ENCODE measurements at regions of chr13 and their contacts with region 1.

Region 1: GRCh38 chr13:48532506-48533499 is at the start of gene RCBTB2:
- DNase-seq: peak; percentile 99
- ATAC-seq: peak; percentile 93
- H3K4me3 Mint-ChIP-seq: peak within 1 kb of the TSS; percentile 92
- H3K27ac Mint-ChIP-seq: peak within 1 kb of the TSS; percentile 99
- H3K4me1 Mint-ChIP-seq: peaks cover 44% of the 10 kb centered on the region
- H3K27me3 Mint-ChIP-seq: no peaks in the 10 kb centered on the region
- total RNA-seq, gene RCBTB2: 31.0 to 31.5 TPM

Region 2: DNA sequence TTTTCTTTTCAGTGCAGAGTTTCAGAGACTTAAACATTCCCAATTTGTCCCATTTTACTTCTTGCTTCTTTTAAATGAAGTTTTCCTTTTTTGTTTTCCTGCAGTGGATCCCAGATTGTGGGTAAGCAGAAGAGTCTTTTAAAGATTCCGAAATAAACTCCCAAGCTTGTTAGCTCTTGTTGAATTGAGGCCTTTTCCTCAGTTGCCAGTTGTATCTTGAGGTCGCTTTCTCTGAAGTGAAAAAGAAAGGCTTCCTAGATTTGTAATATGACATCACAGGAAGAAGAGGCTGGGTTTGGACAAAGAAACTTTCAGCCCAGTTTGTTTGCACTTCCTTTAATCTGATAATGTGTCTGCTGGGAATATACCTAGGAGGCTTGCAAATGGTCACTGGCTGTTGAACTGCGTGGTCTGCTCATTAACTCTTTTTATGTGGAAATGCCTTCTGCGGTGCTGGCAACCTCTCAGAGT is 119.9 kb before region 1 on chr13 and contains the start of gene LPAR6:
- CTCF ChIA-PET with region 1: no interaction called
- POLR2A ChIA-PET with region 1: interaction called, 10 read pairs
- DNase-seq: peak; percentile 35
- ATAC-seq: peak; percentile 46
- H3K4me3 Mint-ChIP-seq: peak within 1 kb of the TSS; percentile 96
- H3K27ac Mint-ChIP-seq: peak within 1 kb of the TSS; percentile 94
- H3K4me1 Mint-ChIP-seq: peaks cover 41% of the 10 kb centered on the region
- H3K27me3 Mint-ChIP-seq: no peaks in the 10 kb centered on the region
- total RNA-seq, gene LPAR6: 47.6 to 50.3 TPM

Region 3: DNA sequence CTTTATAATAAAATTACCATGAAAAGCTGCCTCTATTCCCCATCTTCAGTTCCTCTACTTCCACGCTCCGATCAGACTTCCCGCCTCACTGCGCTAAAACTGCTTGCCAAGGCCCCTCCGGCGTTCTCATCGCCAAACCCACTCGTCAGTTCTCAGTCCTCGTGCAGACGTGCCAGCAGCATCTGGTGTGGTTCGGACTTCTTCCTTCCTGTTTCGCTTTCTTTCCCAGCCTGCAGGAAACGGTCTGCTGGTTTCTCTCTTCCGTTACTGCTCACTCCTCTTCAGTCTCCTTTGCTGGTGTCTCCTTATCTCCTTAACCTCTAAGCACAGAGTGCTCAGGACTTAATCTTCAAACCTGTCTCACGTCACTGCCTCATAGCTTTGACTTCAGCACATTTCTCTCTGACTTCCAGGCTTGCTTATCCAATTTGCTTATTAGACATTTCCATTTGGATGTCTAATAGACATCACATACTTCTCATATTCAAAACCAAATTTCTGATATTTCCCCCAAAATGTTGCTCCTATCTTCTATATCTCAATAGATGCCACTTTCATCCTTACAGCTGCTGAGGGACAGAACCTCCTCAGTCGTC is 40.2 kb before region 1 on chr13:
- CTCF ChIA-PET with region 1: interaction called, 9 read pairs
- POLR2A ChIA-PET with region 1: interaction called, 20 read pairs
- DNase-seq: peak; percentile 90
- ATAC-seq: peak; percentile 85
- H3K4me3 Mint-ChIP-seq: no peak overlapping the region
- H3K27ac Mint-ChIP-seq: no peak overlapping the region
- H3K4me1 Mint-ChIP-seq: peaks cover 61% of the 10 kb centered on the region
- H3K27me3 Mint-ChIP-seq: no peaks in the 10 kb centered on the region

Region 4: GRCh38 chr13:48505597-48506091 is 27.2 kb before region 1 on chr13:
- CTCF ChIA-PET with region 1: interaction called, 7 read pairs
- POLR2A ChIA-PET with region 1: interaction called, 30 read pairs
- DNase-seq: peak; percentile 84
- ATAC-seq: peak; percentile 84
- H3K4me3 Mint-ChIP-seq: peak overlapping the region; percentile 50
- H3K27ac Mint-ChIP-seq: peak overlapping the region; percentile 90
- H3K4me1 Mint-ChIP-seq: peaks cover 90% of the 10 kb centered on the region
- H3K27me3 Mint-ChIP-seq: no peaks in the 10 kb centered on the region

Region 5: DNA sequence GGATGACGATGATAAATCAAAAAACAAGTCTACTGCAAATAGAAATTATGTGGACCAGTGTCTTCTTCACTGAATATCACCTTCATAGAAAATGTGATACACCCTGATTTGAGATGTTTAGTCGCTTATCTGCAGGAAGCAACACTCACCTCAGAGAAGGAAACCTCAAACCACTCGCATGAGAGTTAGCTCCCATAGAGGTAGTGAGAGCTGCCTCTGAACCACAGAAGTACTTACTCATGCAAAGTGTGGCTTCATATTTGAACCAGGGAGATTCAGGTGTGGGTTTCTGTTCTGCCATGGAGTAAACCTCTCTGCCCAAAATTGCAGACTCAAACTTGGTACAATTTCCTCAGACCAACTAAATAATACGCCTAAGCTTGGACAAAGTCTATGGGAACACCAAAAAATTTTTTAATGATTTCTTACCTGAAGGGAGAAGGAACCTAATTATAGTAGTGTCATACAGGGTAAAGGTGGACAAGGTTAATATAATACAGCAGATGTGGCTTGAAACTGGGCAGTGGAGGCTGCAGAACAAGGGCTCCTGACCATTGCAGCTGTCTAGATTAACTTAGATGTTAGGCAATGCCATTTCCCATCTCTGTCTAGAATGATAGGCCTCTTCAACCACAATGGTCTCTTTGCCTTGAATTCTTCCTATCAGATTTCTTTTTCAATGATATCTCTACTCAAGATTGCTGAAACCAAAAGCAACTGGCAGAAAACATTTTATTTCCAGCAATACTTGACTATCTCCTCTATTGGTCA is 29.7 kb after region 1 on chr13:
- CTCF ChIA-PET with region 1: interaction called, 11 read pairs
- POLR2A ChIA-PET with region 1: interaction called, 23 read pairs
- DNase-seq: peak; percentile 93
- ATAC-seq: peak; percentile 94
- H3K4me3 Mint-ChIP-seq: peak overlapping the region; percentile 70
- H3K27ac Mint-ChIP-seq: peak overlapping the region; percentile 90
- H3K4me1 Mint-ChIP-seq: peaks cover 77% of the 10 kb centered on the region
- H3K27me3 Mint-ChIP-seq: peaks cover 14% of the 10 kb centered on the region

Region 6: DNA sequence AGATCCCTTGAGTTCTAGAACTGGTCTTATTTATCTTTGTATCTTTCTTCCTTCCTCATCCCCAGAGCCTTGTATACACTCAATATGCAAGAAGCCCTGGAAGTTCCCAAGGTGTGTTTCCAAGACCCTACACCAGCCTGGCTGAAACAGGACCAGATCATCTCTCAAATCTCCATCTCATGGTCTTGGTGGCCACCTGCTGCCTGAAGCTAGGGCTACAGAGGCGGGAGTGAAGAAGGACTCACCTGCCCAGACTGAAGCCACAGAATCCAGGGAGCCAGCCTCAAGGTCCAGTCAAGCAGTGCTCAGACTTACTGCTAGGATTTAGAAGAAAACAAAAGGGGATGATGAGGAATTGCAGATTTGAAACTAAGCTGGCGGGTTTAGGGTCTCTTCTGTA is 114.8 kb after region 1 on chr13:
- CTCF ChIA-PET with region 1: no interaction called
- POLR2A ChIA-PET with region 1: no interaction called
- DNase-seq: no peak
- ATAC-seq: no peak
- H3K4me3 Mint-ChIP-seq: no peak overlapping the region
- H3K27ac Mint-ChIP-seq: no peak overlapping the region
- H3K4me1 Mint-ChIP-seq: peaks cover under 1% of the 10 kb centered on the region
- H3K27me3 Mint-ChIP-seq: no peaks in the 10 kb centered on the region

Measured in activated CD8-positive, alpha-beta T cell treated with anti-CD3 and anti-CD28 coated beads, Interleukin-2, amount 10 ng/mL, durations not matched to agents 7 days and 5 days (primary cell).